AG04450 (cell line): ENCODE measurements at regions of chr22 and their contacts with region 1.

Region 1: GRCh38 chr22:36180038-36180880 is 19.7 kb upstream of the APOL3 start:
- DNase-seq: no peak
- H3K4me3 ChIP-seq: no peak overlapping the region
- H3K27ac ChIP-seq: no peak overlapping the region
- H3K27me3 ChIP-seq: peaks cover 23% of the 10 kb centered on the region
- CTCF ChIP-seq: peak; percentile 87

Region 2: DNA sequence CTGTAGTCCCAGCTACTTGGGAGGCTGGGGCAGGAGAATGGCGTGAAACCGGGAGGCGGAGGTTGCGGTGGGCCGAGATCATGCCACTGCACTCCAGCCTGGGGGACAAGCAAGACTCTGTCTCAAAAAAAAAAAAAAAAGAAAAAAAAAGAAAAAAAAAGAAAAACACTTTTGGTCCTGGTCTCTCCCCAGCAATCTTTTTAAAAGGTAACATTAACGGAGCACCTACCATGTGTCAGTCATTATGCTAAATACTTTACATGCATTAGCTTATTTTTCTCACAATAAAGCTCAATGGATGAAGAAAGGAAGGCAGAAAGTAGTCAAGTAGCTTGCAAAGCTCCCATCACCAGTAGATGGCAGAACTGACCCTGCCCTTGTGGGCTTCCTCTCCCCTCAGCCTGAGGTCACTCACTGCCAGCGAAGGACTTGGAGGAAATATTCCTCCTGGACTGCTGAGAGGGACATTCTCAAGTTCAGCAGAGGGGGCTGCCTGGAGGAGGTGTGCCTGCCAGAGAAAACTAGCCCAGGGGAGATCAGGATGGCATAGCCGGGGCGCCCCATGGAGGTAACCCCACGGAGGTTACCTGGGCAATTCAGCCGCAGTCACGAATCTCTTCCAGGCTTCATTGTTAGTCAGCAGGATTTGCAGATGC is 35.2 kb before region 1 on chr22:
- CTCF ChIA-PET with region 1: interaction called, 74 read pairs
- POLR2A ChIA-PET with region 1: no interaction called
- DNase-seq: peak; percentile 43
- H3K4me3 ChIP-seq: no peak overlapping the region
- H3K27ac ChIP-seq: peak overlapping the region; percentile 21
- H3K27me3 ChIP-seq: peaks cover 17% of the 10 kb centered on the region
- CTCF ChIP-seq: peak; percentile 94

Region 3: DNA sequence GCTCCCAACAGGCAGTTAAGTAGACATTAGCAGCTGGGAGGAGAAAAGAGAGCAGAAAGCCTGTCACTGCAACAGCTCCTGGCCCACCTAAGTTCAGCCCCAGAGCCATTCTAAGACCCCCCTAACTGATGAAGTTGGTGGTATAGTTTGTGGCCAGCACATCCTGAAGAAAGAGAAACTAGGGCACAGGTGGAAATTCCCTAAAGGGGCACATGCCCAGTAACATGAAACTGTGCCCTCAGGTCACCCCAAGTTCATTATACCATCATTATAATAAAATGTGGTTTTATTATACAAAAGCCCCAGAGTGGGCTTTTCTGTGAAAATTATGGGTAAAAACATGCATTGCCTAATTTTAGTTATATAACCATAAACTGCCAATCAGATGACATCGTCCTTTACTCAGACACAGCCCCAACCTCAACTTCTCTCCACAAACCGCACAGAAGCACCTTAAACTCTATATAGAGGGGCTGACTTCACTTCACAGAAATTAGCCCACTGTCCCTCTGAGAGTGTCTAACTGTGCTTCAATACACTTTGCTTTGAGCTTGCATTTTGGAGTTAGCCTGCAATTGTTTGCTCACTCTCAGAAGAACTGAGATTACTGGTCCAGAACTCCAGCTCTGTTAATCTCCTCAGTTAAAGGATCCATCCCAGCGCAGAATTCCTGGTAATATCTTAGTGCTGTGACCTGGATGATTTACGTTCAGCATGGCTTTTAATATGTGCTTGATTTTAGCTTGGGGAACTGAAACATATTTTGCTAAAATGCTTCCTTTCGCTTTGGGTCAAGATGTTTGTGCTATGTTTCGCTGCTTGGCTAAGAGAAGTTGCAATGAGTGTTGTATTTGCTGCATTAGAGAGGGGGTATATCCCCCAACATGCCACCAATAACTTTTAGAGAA is 17.9 kb before region 1 on chr22:
- CTCF ChIA-PET with region 1: interaction called, 10 read pairs
- POLR2A ChIA-PET with region 1: no interaction called
- DNase-seq: no peak
- H3K4me3 ChIP-seq: no peak overlapping the region
- H3K27ac ChIP-seq: no peak overlapping the region
- H3K27me3 ChIP-seq: peaks cover 30% of the 10 kb centered on the region
- CTCF ChIP-seq: no peak